ENCODE measurements at regions of chrX and their contacts with region 1.

Region 1: DNA sequence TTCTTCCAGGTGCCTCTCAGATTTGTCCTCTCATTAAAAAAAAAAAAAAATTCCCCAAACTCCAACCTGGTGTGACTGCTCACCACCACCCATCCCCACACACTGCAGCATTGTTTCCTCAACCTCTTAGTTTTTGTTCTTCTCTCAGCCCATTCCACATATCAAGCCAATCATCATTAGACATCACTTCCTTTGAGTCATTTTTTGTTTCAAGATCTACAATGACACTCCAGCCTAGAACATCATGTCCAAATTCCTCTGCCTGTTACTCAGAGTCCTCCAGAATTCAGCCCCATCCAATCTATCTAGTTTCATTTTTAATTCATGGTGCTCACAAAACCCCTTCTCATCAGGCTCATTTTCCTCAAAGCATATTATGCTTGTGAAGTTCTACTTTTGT is 262.5 kb upstream of the TEX13A start:
- DNase-seq: peak; percentile 95
- H3K4me3 ChIP-seq: peak overlapping the region in 1 of 3 experiments; percentile 2
- H3K27ac ChIP-seq: peak overlapping the region; percentile 99
- H3K4me1 ChIP-seq: peaks cover 43% of the 10 kb centered on the region
- H3K27me3 ChIP-seq: no peaks in the 10 kb centered on the region
- CTCF ChIP-seq: no peak

Region 2: GRCh38 chrX:105460376-105460775 is 22.6 kb before region 1 on chrX:
- CTCF ChIA-PET with region 1: no interaction called
- dilution Hi-C with region 1: no loop called
- in situ Hi-C with region 1: no loop called
- intact Hi-C with region 1: loop called (anchors 2 kb)
- DNase-seq: peak; percentile 67
- H3K4me3 ChIP-seq: no peak overlapping the region
- H3K27ac ChIP-seq: peak overlapping the region; percentile 72
- H3K4me1 ChIP-seq: peaks cover 20% of the 10 kb centered on the region
- H3K27me3 ChIP-seq: no peaks in the 10 kb centered on the region
- CTCF ChIP-seq: no peak

Region 3: GRCh38 chrX:105803891-105804290 is 320.9 kb after region 1 on chrX:
- CTCF ChIA-PET with region 1: no interaction called
- dilution Hi-C with region 1: no loop called
- in situ Hi-C with region 1: no loop called
- intact Hi-C with region 1: no loop called
- DNase-seq: no peak
- H3K4me3 ChIP-seq: no peak overlapping the region
- H3K27ac ChIP-seq: no peak overlapping the region
- H3K4me1 ChIP-seq: no peaks in the 10 kb centered on the region
- H3K27me3 ChIP-seq: no peaks in the 10 kb centered on the region
- CTCF ChIP-seq: no peak